Pancreas (tissue), 10 donors: ENCODE measurements at regions of chr3 and their contacts with region 1.

Region 1: GRCh38 chr3:185779461-185779860 is 45.4 kb downstream of the IGF2BP2 start:
- DNase-seq: no peak
- ATAC-seq: no peak
- H3K4me3 ChIP-seq: no peak overlapping the region
- H3K27ac ChIP-seq: no peak overlapping the region
- H3K4me1 ChIP-seq: no peaks in the 10 kb centered on the region
- H3K27me3 ChIP-seq: no peaks in the 10 kb centered on the region
- CTCF ChIP-seq: no peak

Region 2: DNA sequence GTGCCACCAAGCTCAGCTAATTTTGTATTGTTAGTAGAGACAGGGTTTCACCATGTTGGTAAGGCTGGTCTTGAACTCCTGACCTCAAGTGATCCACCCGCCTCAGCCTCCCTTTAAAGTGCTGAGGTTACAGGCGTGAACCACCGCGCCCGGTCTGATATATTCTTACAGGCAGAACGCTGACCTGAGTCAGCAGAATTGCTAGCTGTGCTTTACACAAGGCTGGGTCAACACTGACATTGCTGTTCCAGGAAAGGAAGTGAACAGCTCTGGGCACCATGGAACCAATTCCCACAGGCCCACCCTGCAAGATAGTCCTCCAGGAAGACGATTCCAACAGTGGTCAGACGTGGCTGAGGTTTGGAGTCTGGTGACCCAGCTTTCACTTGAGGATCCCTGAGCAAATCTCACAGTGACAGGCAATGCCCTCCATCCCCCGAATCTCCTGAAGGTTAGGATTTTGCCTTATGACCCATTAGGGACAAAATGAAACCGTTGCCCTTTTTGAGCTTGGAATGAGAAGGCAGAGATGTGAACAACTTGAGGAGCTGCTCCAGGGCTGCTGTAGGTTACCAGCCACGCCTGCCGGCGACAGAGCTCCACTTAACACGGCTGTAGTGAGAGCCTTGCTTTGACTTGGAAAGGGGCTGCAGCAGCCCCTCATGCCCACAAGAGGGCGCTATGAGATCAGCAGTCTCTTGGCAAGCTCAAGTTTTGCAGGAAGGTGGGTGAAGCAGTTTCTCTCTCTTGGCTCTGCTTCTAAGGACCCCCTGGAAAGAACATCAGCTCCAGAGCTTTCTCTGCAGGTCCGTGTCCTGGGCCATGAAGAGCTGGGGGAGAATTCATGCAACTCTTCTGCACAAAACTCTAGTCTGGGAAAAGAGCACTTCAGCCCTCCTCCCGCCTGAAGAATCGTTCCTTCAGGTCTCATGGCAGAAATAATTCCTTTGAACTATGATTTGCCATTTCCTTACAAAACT is 119.2 kb before region 1 on chr3:
- intact Hi-C with region 1: loop called in 1 of 3 experiments (anchors 10 kb)
- DNase-seq: peak; percentile 55 to 87 (median 80)
- ATAC-seq: peak; percentile 90 to 94 (median 92)
- H3K4me3 ChIP-seq: peak overlapping the region in 2 of 4 donors; percentile 6 to 22
- H3K27ac ChIP-seq: no peak overlapping the region
- H3K4me1 ChIP-seq: no peaks in the 10 kb centered on the region
- H3K27me3 ChIP-seq: no peaks in the 10 kb centered on the region
- CTCF ChIP-seq: peak; percentile 96 to 98 (median 97)

Region 3: GRCh38 chr3:186287711-186288110 is 508.2 kb after region 1 on chr3:
- intact Hi-C with region 1: no loop called
- DNase-seq: no peak
- ATAC-seq: peak in 1 of 4 donors; percentile 28
- H3K4me3 ChIP-seq: no peak overlapping the region
- H3K27ac ChIP-seq: no peak overlapping the region
- H3K4me1 ChIP-seq: peaks cover 0 to 8% (median 5%) of the 10 kb centered on the region in 3 donors
- H3K27me3 ChIP-seq: no peaks in the 10 kb centered on the region
- CTCF ChIP-seq: no peak

Region 4: DNA sequence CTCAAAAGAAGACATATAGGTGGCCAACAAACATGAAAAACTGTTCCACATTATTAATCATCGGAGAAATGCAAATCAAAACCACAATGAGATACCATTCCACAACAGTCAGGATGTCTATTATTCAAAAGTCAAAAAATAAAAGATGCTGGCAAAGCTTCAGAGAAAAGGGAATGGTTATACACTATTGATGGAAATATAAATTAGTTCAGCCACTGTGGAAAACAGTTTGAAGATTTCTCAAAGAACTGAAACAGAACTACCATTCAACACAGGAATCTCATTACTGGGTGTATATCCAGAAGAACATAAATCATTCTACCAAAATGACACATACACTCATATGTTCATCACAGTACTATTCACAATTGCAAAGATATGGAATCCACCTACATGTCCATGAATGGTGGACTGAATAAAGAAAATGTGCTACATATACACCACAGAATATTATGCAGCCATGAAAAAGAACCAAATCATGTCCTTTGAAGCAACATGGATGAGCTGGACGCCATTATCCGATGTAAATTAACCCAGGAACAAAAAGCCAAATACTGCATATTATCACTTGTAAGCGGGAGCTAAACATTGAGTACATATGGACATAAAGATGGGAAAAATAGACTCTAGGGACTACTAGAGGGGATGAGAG is 615.2 kb after region 1 on chr3:
- intact Hi-C with region 1: no loop called
- DNase-seq: no peak
- ATAC-seq: no peak
- H3K4me3 ChIP-seq: no peak overlapping the region
- H3K27ac ChIP-seq: no peak overlapping the region
- H3K4me1 ChIP-seq: no peaks in the 10 kb centered on the region
- H3K27me3 ChIP-seq: no peaks in the 10 kb centered on the region
- CTCF ChIP-seq: no peak